Right ventricle myocardium superior (tissue), 1 donor: ENCODE measurements at regions of chr14 and their contacts with region 1.

Region 1: GRCh38 chr14:52131640-52132320 is 62.9 kb upstream of the NID2 start:
- DNase-seq: peak; percentile 72
- ATAC-seq: peak; percentile 97

Region 2: DNA sequence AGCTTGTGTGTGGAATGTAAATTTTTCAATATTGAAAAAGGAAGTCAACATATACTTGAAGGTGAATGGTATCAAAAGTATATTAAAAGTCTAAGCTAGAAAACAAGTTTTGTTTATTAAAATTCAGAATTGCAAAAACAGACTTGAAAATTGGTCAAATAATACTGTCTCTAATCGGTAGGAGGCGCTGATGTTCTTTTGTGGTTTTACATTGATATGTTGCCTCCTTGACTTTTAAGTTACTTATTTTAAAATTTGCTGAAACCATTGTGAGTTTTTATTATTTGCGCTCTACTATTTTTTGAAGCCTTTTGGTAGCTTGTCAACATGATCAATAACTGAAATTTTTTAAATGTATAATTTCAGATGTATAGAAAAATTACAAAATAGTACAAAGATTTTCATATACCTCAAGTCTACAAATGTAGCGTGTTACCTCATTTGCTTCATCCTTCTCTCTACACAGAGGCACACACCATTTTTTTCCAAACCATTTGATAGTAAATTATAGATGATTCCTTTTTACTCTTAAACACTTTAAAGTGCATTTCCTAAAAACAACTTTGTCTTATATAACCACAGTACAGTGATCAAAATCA is 135.5 kb before region 1 on chr14:
- intact Hi-C with region 1: loop called (anchors 5 kb)
- DNase-seq: no peak
- ATAC-seq: peak; percentile 64

Region 3: DNA sequence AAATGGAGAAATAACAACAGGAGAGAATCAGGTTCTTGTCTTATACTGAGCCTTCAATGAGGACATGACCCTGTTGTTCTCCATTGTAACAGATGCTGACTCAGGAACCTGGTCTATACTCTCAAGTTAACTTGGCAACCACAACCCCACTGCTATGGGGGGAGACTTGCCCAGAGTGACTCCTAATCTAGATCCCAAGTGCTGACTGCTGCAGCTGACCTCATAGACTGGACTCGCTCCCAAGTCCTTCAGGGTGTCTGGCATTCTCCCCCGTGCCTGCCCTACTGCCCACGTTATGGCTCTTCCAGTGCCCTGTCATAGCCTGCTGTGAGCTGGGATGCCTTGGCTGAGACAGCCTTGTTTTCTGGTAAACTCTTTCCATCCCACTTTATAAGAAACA is 100.0 kb before region 1 on chr14:
- intact Hi-C with region 1: no loop called
- DNase-seq: peak; percentile 82
- ATAC-seq: peak; percentile 95

Region 4: GRCh38 chr14:52222901-52223300 is 91.1 kb after region 1 on chr14:
- intact Hi-C with region 1: no loop called
- DNase-seq: no peak
- ATAC-seq: no peak